ENCODE measurements at regions of chr7 and their contacts with region 1.

Region 1: GRCh38 chr7:30983042-30983913 is 19.5 kb downstream of the GHRHR start:
- DNase-seq: peak; percentile 88
- ATAC-seq: peak; percentile 81 to 89

Region 2: DNA sequence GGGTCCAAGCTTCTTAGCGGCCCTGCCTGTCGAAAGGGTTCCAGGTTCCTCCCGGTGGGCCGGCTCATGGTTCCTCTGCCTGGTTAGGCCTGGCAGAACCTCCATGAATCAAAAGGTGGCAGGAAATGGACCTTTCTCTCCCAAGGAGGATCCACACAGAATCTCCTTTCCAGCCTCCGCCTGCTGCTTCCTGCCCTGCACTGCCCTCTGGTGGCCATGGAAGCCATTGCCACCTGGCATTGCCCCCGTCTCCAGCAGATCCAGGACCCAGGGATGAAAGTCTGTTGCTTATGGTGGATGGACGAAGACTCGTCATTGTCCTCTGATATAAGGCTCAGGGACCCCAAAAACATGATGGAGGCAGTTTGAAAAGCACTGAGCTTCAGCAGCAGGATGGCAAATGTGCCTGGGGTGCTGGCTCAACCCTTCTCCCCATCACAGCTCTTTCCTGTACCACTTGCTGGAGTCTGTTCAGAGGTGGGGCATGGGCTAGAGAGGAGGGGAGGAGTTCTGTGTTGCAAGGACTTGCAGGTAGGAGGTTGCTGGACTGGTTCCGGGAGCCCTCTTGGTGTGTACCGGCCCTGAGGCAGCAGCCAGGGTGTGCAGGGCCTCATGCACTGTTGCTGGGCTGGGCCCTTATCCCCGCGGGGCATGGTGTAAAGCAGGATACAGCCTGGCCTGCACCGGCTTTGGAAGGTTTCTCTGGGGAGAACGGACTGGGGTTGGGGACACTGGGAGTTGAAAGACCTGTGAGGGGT is 242.7 kb before region 1 on chr7:
- intact Hi-C with region 1: loop called in 1 of 2 experiments (anchors 5 kb)
- DNase-seq: peak; percentile 79
- ATAC-seq: peak; percentile 76 to 79

Region 3: GRCh38 chr7:31122649-31123058 is 139.4 kb after region 1 on chr7:
- intact Hi-C with region 1: loop called (anchors 1 to 5 kb)
- DNase-seq: peak; percentile 66
- ATAC-seq: peak; percentile 86 to 90

Measured in left cardiac atrium (tissue), 4 donors.